CD8-positive, alpha-beta T cell (primary cell): ENCODE measurements at regions of chr12 and their contacts with region 1.

Region 1: DNA sequence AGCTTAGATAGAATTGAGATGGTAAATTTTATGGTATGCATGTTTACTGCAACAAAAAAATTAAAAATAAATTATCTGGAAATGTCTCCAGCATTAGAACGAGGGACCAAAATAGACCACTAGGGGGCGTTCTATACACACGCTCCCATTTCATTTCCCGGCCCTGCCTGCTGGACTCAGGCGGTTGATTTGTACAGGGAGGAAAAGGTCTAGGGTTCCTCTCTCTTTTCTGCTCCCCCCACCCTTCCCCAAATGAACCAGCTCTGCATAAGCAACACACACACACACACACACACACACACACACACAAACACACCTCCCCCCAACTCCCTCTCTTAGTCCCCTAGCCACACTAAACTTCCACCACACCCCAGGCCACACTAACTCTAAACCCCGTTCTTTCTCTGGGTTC is 7.8 kb upstream of the DTX1 start:
- DNase-seq: peak; percentile 28 to 80 (median 62)
- ATAC-seq: peak; percentile 80
- H3K4me3 ChIP-seq: no peak overlapping the region
- H3K4me3 Mint-ChIP-seq: no peak overlapping the region
- H3K27ac ChIP-seq: no peak overlapping the region
- H3K27ac Mint-ChIP-seq: no peak overlapping the region
- H3K4me1 ChIP-seq: peaks cover 5% of the 10 kb centered on the region
- H3K4me1 Mint-ChIP-seq: peaks cover 19% of the 10 kb centered on the region
- H3K27me3 ChIP-seq: no peaks in the 10 kb centered on the region
- H3K27me3 Mint-ChIP-seq: peaks cover 4% of the 10 kb centered on the region
- CTCF ChIP-seq: peak; percentile 71

Region 2: DNA sequence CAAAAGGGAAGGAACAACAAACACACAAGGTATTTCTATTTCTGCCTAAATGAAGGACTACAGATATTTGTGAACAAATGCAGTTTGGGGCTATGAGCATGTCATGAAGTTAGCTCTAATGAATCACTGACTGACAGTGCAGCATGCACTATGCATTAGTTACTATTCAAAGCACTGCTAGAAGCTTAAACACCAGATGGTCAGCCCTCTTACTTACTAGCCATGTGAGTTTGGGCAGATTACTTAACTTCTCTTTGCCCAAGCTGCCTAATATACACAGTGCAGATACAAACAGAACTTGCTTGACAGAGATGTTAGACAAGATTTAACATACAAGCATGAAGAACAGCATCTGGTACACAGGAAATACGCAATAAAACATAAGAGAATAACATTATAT is 1545.6 kb before region 1 on chr12:
- CTCF ChIA-PET with region 1: no interaction called
- POLR2A ChIA-PET with region 1: no interaction called
- intact Hi-C with region 1: no loop called
- DNase-seq: no peak
- ATAC-seq: no peak
- H3K4me3 ChIP-seq: no peak overlapping the region
- H3K4me3 Mint-ChIP-seq: no peak overlapping the region
- H3K27ac ChIP-seq: no peak overlapping the region
- H3K27ac Mint-ChIP-seq: no peak overlapping the region
- H3K4me1 ChIP-seq: no peaks in the 10 kb centered on the region
- H3K4me1 Mint-ChIP-seq: peaks cover 10% of the 10 kb centered on the region
- H3K27me3 ChIP-seq: no peaks in the 10 kb centered on the region
- H3K27me3 Mint-ChIP-seq: no peaks in the 10 kb centered on the region
- CTCF ChIP-seq: no peak

Region 3: DNA sequence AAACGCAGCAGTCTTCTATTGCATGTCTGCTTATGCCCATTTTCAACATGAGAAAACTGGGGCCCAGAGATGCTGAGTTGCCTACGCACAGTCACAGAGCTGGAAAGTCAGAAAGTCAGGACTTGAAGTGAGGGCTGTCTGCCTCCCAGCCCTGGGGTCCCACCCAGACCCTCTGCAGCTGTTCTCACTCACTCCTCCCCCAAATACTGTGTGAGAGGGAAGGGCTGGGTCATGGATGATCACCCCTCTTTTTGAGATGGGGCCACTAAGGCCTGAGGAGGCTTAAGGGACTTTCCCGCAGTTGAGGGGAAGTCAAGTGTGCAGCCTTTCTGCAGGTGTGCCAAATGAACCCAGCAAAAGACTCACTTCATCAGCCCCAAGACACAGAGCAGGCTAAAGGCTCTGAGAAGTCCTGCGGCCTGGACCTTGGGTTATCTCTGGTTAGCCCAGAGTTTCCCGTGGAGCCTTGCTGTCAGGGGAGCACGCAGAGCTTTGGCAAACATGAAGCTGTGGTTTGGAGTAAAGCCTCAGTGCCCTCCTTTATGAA is 26.5 kb after region 1 on chr12:
- CTCF ChIA-PET with region 1: interaction called, 13 read pairs
- POLR2A ChIA-PET with region 1: no interaction called
- intact Hi-C with region 1: no loop called
- DNase-seq: peak in 1 of 9 experiments; percentile 45
- ATAC-seq: peak; percentile 46
- H3K4me3 ChIP-seq: no peak overlapping the region
- H3K4me3 Mint-ChIP-seq: no peak overlapping the region
- H3K27ac ChIP-seq: peak overlapping the region in 1 of 2 experiments; percentile 12
- H3K27ac Mint-ChIP-seq: peak overlapping the region; percentile 21
- H3K4me1 ChIP-seq: peaks cover 21% of the 10 kb centered on the region
- H3K4me1 Mint-ChIP-seq: peaks cover 40% of the 10 kb centered on the region
- H3K27me3 ChIP-seq: no peaks in the 10 kb centered on the region
- H3K27me3 Mint-ChIP-seq: no peaks in the 10 kb centered on the region
- CTCF ChIP-seq: no peak

Region 4: DNA sequence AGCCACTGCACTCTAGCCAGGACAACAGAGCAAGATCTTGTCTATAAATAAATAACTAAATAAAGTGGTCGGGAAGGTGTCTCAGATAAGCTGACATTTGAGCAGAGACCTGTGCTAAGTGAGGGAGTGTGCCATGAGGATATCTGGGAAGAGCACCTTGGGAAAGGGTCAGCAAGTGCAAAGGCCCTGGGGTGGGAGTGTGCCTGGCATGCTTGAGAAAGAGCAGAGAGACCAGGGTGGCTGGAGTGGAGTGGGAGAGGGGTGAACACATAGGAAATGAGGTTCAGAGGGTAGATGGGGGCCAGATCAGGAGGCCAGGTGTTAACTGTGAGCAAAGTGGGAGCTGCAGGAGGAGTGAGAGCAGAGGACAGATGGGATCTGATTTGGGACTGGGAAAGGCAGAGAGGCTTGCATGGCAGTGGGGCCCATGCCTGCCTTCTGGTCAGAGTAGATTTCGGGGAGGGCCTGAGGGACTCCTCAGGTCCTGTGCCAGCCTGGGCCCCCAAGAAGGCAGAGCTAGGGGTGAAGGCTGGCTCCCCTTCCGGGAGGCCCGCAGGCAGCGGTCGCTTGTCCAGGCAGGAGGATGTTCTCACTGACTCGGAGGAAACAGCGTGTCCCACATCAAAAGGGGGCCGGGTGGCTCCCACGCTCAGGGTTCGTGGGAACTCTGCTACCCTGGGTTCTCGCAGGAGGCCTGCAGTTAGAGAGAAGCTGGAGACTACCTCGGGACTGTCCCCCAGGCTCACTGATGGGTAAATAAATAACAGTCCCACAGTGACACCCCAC is 40.4 kb after region 1 on chr12:
- CTCF ChIA-PET with region 1: interaction called, 113 read pairs
- POLR2A ChIA-PET with region 1: interaction called, 3 read pairs
- intact Hi-C with region 1: no loop called
- DNase-seq: peak in 8 of 9 experiments; percentile 16 to 71 (median 48)
- ATAC-seq: peak; percentile 44
- H3K4me3 ChIP-seq: peak overlapping the region; percentile 6 to 9
- H3K4me3 Mint-ChIP-seq: peak overlapping the region; percentile 66
- H3K27ac ChIP-seq: peak overlapping the region in 1 of 2 experiments; percentile 71
- H3K27ac Mint-ChIP-seq: peak overlapping the region; percentile 89
- H3K4me1 ChIP-seq: peaks cover 76% of the 10 kb centered on the region
- H3K4me1 Mint-ChIP-seq: peaks cover 82% of the 10 kb centered on the region
- H3K27me3 ChIP-seq: no peaks in the 10 kb centered on the region
- H3K27me3 Mint-ChIP-seq: no peaks in the 10 kb centered on the region
- CTCF ChIP-seq: no peak

Region 5: DNA sequence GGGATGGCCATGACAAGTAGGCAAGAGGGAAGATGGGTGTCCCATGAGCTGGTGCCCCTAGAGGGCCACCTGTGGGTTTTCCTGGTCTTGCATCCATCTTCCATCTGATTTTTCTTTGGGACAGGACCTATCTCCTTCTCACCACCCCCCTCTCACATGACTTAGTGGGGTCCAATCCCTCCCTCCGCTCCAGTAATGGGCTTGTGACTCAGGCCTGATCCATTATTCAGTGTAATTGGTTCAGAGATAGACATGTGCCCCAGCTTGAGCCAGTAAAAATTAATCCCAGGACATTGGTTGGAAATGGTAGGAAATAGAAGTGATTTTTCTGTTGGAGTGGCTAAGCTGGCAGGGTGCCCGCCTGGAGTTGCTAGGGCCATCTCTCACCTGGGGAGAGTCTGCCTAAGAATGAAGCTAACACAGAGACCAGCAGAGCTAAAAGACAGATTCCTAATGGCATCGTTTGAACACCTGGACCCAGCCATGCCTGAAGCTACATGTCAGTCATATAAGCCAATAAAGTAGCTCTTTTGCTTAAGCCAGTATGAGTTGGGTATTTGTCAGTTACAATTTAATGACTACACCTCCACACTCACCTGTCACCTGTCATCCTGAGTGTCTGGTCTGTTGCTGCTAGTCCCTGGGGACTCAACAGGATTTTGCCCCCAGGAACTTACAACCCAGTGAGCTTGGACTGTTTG is 72.1 kb after region 1 on chr12:
- CTCF ChIA-PET with region 1: interaction called, 13 read pairs
- POLR2A ChIA-PET with region 1: no interaction called
- intact Hi-C with region 1: no loop called
- DNase-seq: no peak
- ATAC-seq: no peak
- H3K4me3 ChIP-seq: no peak overlapping the region
- H3K4me3 Mint-ChIP-seq: no peak overlapping the region
- H3K27ac ChIP-seq: no peak overlapping the region
- H3K27ac Mint-ChIP-seq: no peak overlapping the region
- H3K4me1 ChIP-seq: no peaks in the 10 kb centered on the region
- H3K4me1 Mint-ChIP-seq: no peaks in the 10 kb centered on the region
- H3K27me3 ChIP-seq: no peaks in the 10 kb centered on the region
- H3K27me3 Mint-ChIP-seq: peaks cover 10% of the 10 kb centered on the region
- CTCF ChIP-seq: no peak

Region 6: DNA sequence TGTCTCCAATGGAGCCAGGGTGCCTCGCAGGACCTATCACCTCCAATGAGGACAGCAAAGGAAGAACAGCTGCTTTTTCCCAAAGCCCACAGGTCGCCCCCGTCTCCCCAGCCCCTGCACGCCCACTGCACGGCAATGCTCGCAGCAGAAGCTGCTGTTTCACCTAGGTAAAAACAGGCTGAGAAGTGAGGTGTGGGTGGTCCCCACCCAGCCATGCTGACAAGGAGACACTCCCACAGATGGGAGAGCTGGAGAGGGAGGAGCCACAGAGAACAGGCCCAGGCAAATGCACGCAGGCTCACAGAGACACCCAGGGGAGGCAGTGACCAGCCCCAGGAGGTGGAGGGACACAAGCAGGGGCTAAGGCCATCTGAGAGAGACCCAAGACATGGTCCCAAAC is 111.2 kb after region 1 on chr12:
- CTCF ChIA-PET with region 1: interaction called, 14 read pairs
- POLR2A ChIA-PET with region 1: no interaction called
- intact Hi-C with region 1: no loop called
- DNase-seq: no peak
- ATAC-seq: no peak
- H3K4me3 ChIP-seq: no peak overlapping the region
- H3K4me3 Mint-ChIP-seq: no peak overlapping the region
- H3K27ac ChIP-seq: no peak overlapping the region
- H3K27ac Mint-ChIP-seq: no peak overlapping the region
- H3K4me1 ChIP-seq: no peaks in the 10 kb centered on the region
- H3K4me1 Mint-ChIP-seq: peaks cover 5% of the 10 kb centered on the region
- H3K27me3 ChIP-seq: peaks cover 0 to 4% of the 10 kb centered on the region in 2 experiments
- H3K27me3 Mint-ChIP-seq: no peaks in the 10 kb centered on the region
- CTCF ChIP-seq: no peak

Region 7: GRCh38 chr12:113174461-113175384 is 126.0 kb after region 1 on chr12:
- CTCF ChIA-PET with region 1: interaction called, 91 read pairs
- POLR2A ChIA-PET with region 1: no interaction called
- intact Hi-C with region 1: loop called (anchors 1 kb)
- DNase-seq: peak; percentile 55 to 85 (median 76)
- ATAC-seq: peak; percentile 95
- H3K4me3 ChIP-seq: no peak overlapping the region
- H3K4me3 Mint-ChIP-seq: no peak overlapping the region
- H3K27ac ChIP-seq: no peak overlapping the region
- H3K27ac Mint-ChIP-seq: no peak overlapping the region
- H3K4me1 ChIP-seq: no peaks in the 10 kb centered on the region
- H3K4me1 Mint-ChIP-seq: peaks cover 2% of the 10 kb centered on the region
- H3K27me3 ChIP-seq: no peaks in the 10 kb centered on the region
- H3K27me3 Mint-ChIP-seq: no peaks in the 10 kb centered on the region
- CTCF ChIP-seq: peak; percentile 96

Region 8: DNA sequence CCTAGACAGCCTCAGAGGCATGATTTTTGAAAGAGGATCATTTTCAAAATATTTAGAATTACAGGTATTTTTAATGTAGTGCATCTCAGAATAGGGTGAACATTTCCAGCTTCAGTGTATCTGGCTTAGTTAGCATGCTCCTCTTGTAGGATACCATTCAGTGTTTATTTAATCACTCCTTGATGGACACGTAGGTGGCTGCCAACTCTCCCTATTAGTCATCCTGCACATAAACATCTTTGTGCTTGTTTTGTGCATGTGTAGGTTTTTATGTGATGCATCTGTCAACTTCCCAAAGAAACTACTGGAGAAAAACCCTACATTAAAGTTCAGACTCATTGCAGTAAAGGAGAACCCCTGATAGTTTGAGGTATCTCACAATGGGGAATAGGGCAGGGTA is 969.9 kb after region 1 on chr12:
- CTCF ChIA-PET with region 1: no interaction called
- POLR2A ChIA-PET with region 1: no interaction called
- intact Hi-C with region 1: no loop called
- DNase-seq: no peak
- ATAC-seq: no peak
- H3K4me3 ChIP-seq: no peak overlapping the region
- H3K4me3 Mint-ChIP-seq: no peak overlapping the region
- H3K27ac ChIP-seq: no peak overlapping the region
- H3K27ac Mint-ChIP-seq: no peak overlapping the region
- H3K4me1 ChIP-seq: no peaks in the 10 kb centered on the region
- H3K4me1 Mint-ChIP-seq: no peaks in the 10 kb centered on the region
- H3K27me3 ChIP-seq: peaks cover 0 to 2% of the 10 kb centered on the region in 2 experiments
- H3K27me3 Mint-ChIP-seq: peaks cover 12% of the 10 kb centered on the region
- CTCF ChIP-seq: no peak